PC-9 (cell line): ENCODE measurements at regions of chr12 and their contacts with region 1.

Region 1: GRCh38 chr12:98998697-98999299 is 353.7 kb downstream of the APAF1 start:
- DNase-seq: no peak
- H3K4me3 ChIP-seq: no peak overlapping the region
- H3K27ac ChIP-seq: no peak overlapping the region
- H3K4me1 ChIP-seq: no peaks in the 10 kb centered on the region
- H3K27me3 ChIP-seq: peaks cover 22% of the 10 kb centered on the region
- CTCF ChIP-seq: peak; percentile 78

Region 2: GRCh38 chr12:98418357-98419075 is 580.3 kb before region 1 on chr12:
- CTCF ChIA-PET with region 1: no interaction called
- POLR2A ChIA-PET with region 1: no interaction called
- intact Hi-C with region 1: loop called (anchors 5 kb)
- DNase-seq: peak; percentile 93 to 97
- H3K4me3 ChIP-seq: peak overlapping the region; percentile 6; the same call in 1 of the 2 replicates
- H3K27ac ChIP-seq: peak overlapping the region; percentile 77
- H3K4me1 ChIP-seq: peaks cover 20% of the 10 kb centered on the region
- H3K27me3 ChIP-seq: no peaks in the 10 kb centered on the region
- CTCF ChIP-seq: no peak

Region 3: DNA sequence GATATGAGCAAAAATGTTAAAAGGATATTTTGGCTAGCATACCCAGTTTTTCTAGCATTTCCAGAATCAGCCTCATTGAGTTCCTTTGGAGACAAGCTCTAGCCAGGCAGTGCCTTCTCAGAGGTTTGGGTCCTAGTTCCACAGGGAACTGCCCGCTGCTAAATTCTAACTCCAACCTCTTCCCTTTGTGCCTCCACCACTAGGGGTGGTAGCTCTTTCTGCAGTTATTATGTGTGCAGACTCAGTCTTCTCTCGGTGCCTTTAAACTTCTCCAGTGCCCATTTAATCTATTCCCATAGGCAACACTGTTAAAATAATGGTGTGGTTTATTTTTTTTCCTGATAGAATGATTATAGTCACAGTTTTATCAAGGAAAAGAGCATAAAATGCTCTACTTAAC is 426.8 kb before region 1 on chr12:
- CTCF ChIA-PET with region 1: no interaction called
- POLR2A ChIA-PET with region 1: no interaction called
- intact Hi-C with region 1: loop called (anchors 2 kb)
- DNase-seq: no peak
- H3K4me3 ChIP-seq: no peak overlapping the region
- H3K27ac ChIP-seq: no peak overlapping the region
- H3K4me1 ChIP-seq: no peaks in the 10 kb centered on the region; the same call in 1 of the 2 replicates
- H3K27me3 ChIP-seq: no peaks in the 10 kb centered on the region
- CTCF ChIP-seq: peak; percentile 33; the same call in 1 of the 2 replicates

Region 4: DNA sequence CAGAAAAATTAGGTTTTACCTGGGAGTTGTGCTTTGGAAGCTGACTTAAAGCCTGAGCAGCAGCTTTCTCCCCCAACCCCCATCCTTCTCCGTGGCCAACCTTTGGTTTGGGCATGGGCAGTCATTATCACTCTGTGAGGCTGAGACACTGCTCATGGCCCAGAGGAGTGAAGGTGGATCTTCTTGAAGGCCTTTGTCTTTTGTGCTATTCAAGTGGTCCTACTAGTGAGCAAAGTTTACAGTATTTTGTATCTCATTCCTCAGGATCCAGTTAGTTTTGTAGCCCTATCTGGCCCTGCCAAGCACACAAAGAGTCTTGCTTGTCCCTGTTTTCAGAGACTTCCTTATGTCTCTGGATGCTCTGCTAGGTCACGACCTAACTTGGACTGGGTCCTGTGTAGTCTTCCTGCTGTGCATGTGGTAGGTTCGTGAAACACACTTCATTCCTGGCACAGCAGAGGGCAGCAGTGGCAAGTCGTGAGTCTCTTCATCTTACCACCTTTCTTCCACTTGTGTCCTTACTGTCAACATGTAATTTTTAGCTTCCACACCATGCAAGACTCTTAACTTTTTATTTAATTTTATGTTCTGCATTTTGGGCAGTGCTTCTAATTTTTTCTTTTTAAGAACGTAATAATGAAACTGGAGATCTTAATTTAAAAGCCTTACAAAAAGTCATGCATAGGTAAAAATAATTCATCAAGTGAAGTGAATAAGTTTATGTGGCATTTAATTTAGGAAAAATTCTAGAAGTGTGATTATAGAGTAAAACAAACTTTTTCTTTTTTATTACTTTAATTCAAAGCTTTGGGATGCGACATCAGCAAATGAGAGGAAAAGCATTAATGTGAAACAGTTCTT is 300.0 kb before region 1 on chr12:
- CTCF ChIA-PET with region 1: no interaction called
- POLR2A ChIA-PET with region 1: no interaction called
- intact Hi-C with region 1: loop called (anchors 5 kb)
- DNase-seq: peak; percentile 28 to 41
- H3K4me3 ChIP-seq: no peak overlapping the region
- H3K27ac ChIP-seq: no peak overlapping the region
- H3K4me1 ChIP-seq: no peaks in the 10 kb centered on the region
- H3K27me3 ChIP-seq: no peaks in the 10 kb centered on the region
- CTCF ChIP-seq: peak; percentile 72

Region 5: GRCh38 chr12:98725476-98726247 is 273.1 kb before region 1 on chr12:
- CTCF ChIA-PET with region 1: no interaction called
- POLR2A ChIA-PET with region 1: no interaction called
- intact Hi-C with region 1: loop called (anchors 5 kb)
- DNase-seq: peak in 1 of 2 experiments; percentile 29
- H3K4me3 ChIP-seq: no peak overlapping the region
- H3K27ac ChIP-seq: no peak overlapping the region
- H3K4me1 ChIP-seq: no peaks in the 10 kb centered on the region
- H3K27me3 ChIP-seq: no peaks in the 10 kb centered on the region
- CTCF ChIP-seq: peak; percentile 46; the same call in 1 of the 2 replicates